ENCODE measurements at regions of chr1 and their contacts with region 1.

Region 1: DNA sequence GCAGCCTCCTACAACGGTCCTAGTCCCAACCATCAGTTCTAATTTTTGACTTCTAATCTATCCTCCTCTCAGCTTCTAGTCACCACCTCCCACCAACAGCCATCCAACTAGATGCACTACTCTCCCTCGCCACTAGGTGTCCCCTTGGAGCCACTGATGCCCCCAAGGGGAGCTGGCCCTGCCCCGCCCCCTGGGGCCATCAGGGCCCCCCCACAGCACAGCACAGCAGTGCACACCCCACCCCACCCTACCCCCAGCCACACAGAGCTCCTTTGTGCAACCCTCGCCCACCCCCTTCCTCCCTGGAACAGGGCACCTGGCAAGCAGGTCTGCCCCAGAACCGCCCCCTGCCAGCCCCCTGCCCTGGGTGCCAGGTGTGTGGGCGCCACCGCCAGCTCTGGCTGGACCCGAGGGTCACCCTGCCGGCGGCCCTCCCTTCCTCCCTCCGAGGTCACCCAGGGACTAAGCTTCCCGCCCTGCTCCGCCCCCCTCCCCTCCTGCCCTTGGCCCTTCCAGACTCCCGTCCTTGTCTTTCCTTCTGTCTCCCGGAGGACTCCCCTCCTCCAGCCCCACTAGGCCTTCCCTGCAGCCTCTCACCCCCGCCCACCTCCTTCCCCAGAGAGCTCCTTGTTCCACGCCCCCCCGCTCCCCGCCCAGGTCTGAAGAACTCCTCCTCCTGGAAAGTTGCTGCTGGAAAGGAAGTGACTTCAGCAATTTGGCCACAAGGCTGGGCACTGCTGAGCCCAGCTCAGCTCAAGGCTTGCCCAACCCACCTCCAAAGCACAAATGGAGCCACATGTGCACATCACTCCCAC is 47.0 kb downstream of the AHDC1 start:
- DNase-seq: peak; percentile 85

Region 2: DNA sequence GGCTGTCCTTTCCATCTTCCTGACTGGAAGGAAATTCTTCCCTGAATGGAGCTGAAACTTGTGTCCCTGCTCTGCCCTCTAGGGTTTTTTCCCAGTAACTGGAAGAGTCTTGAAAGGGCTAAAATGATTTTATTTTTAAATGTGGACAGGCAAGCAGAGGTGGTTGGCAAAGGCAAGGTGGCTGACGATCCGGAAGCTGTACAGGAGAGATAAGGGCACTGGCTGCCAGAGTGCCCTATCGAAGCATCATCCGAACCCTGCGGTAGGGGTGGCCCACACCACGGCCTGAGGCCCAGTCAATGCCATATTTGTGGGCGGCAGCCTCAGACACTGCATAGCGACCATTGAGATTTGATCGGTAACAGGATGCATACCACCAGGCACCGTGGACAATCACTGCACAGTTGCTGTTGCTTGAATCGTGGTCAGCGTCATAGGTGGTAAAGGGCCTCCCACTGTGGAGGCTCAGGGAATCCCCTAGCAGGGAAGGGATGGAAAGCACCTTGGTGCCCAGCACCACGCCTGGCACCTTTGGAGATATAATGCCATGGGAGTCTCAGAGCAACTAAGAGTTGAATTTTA is 187.9 kb before region 1 on chr1:
- CTCF ChIA-PET with region 1: no interaction called
- POLR2A ChIA-PET with region 1: no interaction called
- DNase-seq: no peak

Region 3: DNA sequence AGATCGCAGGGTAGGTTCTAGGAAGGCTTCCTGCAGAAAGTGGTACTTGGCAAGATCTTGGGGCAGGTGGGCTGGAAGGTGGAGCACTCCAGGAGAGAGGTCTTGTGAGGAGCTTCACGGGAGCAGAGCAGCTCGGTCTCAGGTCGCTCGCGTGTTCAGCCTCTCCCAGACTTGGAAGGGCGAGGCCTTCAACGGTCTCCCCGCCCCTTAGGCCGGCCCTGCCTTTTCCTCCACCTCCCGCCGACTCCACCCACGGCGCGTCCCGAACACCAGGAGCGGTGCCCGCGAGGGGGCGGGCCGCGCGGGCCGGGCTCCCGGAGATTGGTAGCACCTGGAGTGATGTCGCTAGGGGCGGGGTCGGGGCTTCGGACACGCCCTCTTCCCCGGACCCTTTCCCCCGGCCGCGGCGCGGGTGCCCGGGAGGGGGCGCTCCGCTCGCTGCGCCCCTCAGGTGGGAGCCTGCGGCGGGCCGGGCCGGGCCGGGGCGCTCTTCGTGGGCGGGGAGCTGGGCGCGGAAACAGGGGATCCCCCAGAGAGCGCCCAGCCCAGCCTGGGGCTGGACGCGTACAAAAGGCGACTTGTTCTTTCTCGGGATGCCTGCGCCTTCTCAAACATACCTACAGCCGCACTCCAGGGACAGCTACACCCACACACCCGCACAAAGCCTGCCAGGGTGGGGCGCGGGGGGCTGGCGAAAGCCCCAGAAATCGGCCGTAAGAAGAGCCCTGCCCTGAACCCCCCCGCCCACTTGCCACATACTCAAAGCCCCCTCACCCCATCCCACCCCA is 11.5 kb after region 1 on chr1:
- CTCF ChIA-PET with region 1: interaction called, 50 read pairs
- POLR2A ChIA-PET with region 1: interaction called, 3 read pairs
- DNase-seq: peak; percentile 97

Region 4: GRCh38 chr1:27574871-27575831 is 18.2 kb after region 1 on chr1:
- CTCF ChIA-PET with region 1: interaction called, 50 read pairs
- POLR2A ChIA-PET with region 1: interaction called, 3 read pairs
- DNase-seq: peak; percentile 67

Region 5: GRCh38 chr1:27643701-27644625 is 87.0 kb after region 1 on chr1:
- CTCF ChIA-PET with region 1: no interaction called
- POLR2A ChIA-PET with region 1: no interaction called
- DNase-seq: peak; percentile 74

Region 6: GRCh38 chr1:27940297-27940696 is 383.3 kb after region 1 on chr1:
- CTCF ChIA-PET with region 1: no interaction called
- POLR2A ChIA-PET with region 1: no interaction called
- DNase-seq: peak; percentile 73